Activated B cell treated with CpG ODN at 0.5 μM for 24 hours (primary cell): ENCODE measurements at regions of chr19 and their contacts with region 1.

Region 1: DNA sequence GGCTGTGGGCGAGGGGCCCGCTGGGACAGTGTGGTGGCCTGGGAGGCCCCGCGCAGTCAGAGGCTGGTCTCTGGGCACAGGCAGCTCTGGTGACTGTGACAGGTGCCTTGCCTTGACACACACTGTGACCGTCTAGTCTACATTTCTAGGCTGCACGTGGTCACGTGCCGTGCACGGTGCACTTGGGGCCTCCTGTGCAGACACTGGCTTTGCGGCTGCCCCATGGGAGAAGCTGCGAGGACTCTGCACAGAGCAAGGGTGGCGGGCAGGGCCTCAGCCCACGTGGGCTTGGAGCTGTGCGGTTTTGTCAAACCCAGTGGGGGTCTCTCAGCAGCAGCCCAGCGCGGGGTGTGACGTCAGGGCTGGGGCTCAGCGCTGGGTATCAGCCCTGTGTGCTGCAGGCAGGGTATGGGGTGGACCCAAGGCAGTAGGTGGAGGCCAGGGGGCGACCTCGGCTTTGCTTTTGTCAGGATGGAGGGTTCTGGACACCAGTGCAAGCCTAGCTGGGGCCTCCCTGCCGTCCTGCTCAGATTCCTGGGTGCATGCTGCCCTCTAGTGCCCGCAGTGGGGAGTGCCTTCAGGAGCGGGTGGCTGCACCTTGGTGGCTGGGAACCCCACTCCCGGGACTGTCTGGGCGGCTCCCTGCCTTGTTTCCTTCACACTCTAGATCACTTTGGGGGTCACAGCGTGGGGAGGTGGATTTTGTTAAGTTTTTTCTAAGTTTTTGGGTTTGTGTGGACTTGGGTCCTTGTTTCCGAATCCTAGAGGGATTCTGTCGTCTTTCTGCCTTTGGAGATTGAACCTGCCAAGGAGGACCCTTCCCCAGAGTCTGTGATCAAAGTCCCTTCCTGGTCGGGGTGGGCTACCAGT is 62.6 kb downstream of the KDM4B start:
- DNase-seq: peak; percentile 85
- ATAC-seq: peak; percentile 94
- H3K4me3 Mint-ChIP-seq: no peak overlapping the region
- H3K27ac Mint-ChIP-seq: no peak overlapping the region
- H3K4me1 Mint-ChIP-seq: peaks cover 17% of the 10 kb centered on the region
- H3K27me3 Mint-ChIP-seq: no peaks in the 10 kb centered on the region
- CTCF ChIP-seq: peak; percentile 33

Region 2: DNA sequence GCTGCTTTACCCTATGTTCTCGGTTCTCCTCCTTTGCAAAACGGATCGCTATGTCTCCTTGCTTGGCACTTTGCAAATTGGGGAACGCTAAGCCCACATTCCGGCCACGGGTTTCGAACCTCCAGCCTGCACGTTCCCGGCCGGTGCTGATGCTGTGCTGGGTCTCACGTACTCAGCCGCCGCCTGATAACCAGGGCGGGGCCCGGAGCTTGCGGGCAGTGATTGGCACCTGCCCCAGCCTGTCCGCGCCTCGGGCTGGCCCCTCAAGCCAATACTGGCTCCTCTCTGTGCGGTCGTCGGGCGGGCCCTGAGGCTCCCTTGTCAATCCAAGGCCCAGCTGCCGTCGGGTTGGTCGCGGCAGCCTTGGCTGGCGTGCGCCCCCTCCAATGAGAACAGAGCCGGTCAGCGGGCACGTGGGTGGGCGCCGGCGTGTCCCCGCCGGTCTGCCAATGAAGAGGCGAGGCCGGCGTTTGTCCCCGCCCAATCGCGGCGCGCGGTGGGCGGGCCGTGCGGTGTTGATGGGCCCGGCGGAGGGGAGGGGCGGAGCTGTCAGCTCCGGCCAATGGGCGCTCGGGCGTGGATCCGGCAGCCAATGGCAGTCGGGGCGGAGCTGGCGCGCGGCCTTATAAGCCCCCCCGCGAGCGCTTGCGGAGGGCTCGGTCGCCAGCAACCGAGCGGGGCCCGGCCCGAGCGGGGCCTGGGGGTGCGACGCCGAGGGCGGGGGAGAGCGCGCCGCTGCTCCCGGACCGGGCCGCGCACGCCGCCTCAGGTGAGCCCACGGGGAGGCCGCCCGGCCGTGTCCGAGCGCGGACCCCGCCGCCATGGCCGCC is 62.8 kb before region 1 on chr19 and contains the start of gene KDM4B:
- CTCF ChIA-PET with region 1: interaction called, 4 read pairs
- POLR2A ChIA-PET with region 1: interaction called, 4 read pairs
- intact Hi-C with region 1: loop called (anchors 1 kb)
- DNase-seq: peak; percentile 99
- ATAC-seq: peak; percentile 89
- H3K4me3 Mint-ChIP-seq: peak within 1 kb of the TSS; percentile 88
- H3K27ac Mint-ChIP-seq: peak within 1 kb of the TSS; percentile 88
- H3K4me1 Mint-ChIP-seq: peaks cover 31% of the 10 kb centered on the region
- H3K27me3 Mint-ChIP-seq: no peaks in the 10 kb centered on the region
- CTCF ChIP-seq: no peak
- total RNA-seq, gene KDM4B: 76.4 and 88.9 TPM in 2 replicates